ENCODE measurements at regions of chr1 and their contacts with region 1.

Region 1: GRCh38 chr1:175757381-175758015 is 14.1 kb upstream of the TNR start:
- DNase-seq: peak; percentile 86

Region 2: GRCh38 chr1:175612286-175612685 is 145.2 kb before region 1 on chr1:
- CTCF ChIA-PET with region 1: interaction called, 10 read pairs
- POLR2A ChIA-PET with region 1: no interaction called
- DNase-seq: no peak

Region 3: GRCh38 chr1:175742790-175743459 is 14.6 kb before region 1 on chr1:
- CTCF ChIA-PET with region 1: interaction called, 48 read pairs
- POLR2A ChIA-PET with region 1: no interaction called
- DNase-seq: peak; percentile 55